Sciatic nerve (tissue), 2 donors: ENCODE measurements at regions of chr2 and their contacts with region 1.

Region 1: GRCh38 chr2:126839796-126840195 is 58.9 kb upstream of the TEX51 start:
- DNase-seq: no peak
- ATAC-seq: no peak

Region 2: DNA sequence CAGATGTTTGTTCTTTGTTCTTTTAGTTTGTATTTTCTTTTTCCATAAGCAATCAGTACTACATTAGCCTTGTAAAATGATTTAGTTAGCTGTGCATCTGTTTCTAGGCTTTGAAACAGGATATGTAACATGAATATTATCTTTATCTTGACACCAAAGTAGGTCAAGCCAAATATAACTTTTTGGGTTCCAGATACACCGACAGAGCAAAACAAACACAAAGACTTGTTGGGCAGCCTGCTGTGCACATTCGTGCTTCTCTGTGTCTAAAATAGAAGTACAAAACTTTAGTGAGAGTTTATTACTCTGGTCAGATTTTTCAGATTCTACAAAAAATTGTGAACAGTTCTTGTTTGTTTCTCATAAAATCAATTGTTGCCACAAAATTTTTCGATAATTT is 1243.2 kb before region 1 on chr2:
- intact Hi-C with region 1: loop called (anchors 5 kb)
- DNase-seq: no peak
- ATAC-seq: no peak

Region 3: DNA sequence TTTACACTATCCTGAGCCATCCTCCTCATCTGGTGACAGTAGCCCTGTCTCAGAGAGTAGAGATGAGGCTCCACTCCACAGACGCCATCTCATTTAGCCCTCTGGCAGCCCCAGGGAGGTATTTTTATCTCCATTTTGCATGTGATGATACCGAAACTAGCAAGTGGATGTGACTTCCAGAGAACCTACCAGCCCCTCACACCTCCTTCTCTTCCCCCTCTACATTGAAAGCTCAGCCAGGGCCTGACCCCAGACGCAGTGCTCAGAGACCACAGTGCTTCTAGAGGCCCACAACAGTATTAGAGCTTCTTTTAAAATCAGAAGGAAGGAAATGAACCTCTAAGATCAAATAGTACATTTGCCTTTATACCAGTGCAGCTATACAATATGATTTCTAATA is 175.6 kb before region 1 on chr2:
- intact Hi-C with region 1: no loop called
- DNase-seq: no peak
- ATAC-seq: no peak

Region 4: GRCh38 chr2:126885751-126886210 is 46.0 kb after region 1 on chr2:
- intact Hi-C with region 1: loop called (anchors 2 kb)
- DNase-seq: peak; percentile 76
- ATAC-seq: peak; percentile 81